ENCODE measurements at regions of chr6 and their contacts with region 1.

Region 1: GRCh38 chr6:11653028-11653583 is 115.6 kb downstream of the TMEM170B start:
- DNase-seq: peak in 3 of 4 experiments; percentile 24 to 33 (median 30)
- ATAC-seq: no peak; the same call in 2 of the 3 replicates
- H3K4me3 ChIP-seq: no peak overlapping the region
- H3K27ac ChIP-seq: no peak overlapping the region
- H3K4me1 ChIP-seq: no peaks in the 10 kb centered on the region
- H3K27me3 ChIP-seq: peaks cover 25 to 48% of the 10 kb centered on the region in 2 experiments
- CTCF ChIP-seq: no peak
- EP300 ChIP-seq: no peak
- POLR2A ChIP-seq: no peak
- RAD21 ChIP-seq: no peak

Region 2: GRCh38 chr6:11585426-11586016 is 67.6 kb before region 1 on chr6:
- CTCF ChIA-PET with region 1: interaction called, 4 read pairs
- POLR2A ChIA-PET with region 1: no interaction called
- in situ Hi-C with region 1: no loop called
- intact Hi-C with region 1: loop called (anchors 2 kb)
- DNase-seq: peak; percentile 21 to 64 (median 39)
- ATAC-seq: peak; percentile 75
- H3K4me3 ChIP-seq: no peak overlapping the region
- H3K27ac ChIP-seq: no peak overlapping the region
- H3K4me1 ChIP-seq: no peaks in the 10 kb centered on the region
- H3K27me3 ChIP-seq: peaks cover 4 to 16% of the 10 kb centered on the region in 2 experiments; a peak in 3 of 5 replicates
- CTCF ChIP-seq: peak; percentile 49 to 83 (median 62); a peak in 5 of 6 replicates
- EP300 ChIP-seq: no peak
- POLR2A ChIP-seq: no peak
- RAD21 ChIP-seq: peak; percentile 85 to 88

Region 3: DNA sequence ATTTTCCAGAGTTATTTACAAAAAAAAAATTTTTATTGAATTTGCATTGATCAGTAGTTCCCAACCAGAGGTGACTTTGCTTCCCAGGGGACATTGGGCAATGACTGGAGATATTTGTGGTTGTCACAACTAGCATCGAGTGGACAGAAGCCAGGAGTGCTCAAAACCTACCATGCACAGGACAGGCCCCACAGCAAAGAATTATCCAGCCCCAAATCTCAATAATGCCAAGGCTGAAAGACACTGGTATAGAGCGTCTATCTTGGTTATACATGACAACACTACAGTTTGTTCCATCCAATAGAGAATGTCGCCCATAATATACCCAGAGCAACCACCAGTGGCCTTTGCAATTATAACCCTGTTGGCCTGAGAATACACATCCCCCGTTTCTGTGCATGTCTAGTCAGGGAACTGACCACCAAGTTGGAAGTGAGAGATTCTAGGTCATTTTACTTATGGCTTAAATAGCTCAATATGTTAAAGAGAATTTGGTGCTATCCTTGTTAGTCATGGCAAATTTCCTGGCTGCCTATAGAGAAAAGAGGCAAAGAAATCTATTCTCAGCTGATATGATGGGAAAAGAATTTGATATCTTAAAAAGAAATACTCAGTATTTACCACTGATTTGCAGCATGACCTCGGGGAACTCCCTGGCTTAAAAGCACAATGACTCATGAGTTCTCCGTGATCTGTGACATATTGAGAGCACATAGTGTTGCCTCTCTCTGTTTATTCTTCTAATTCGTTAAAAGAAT is 201.5 kb after region 1 on chr6:
- CTCF ChIA-PET with region 1: no interaction called
- POLR2A ChIA-PET with region 1: no interaction called
- in situ Hi-C with region 1: no loop called
- intact Hi-C with region 1: no loop called
- DNase-seq: peak in 2 of 4 experiments; percentile 35 to 42
- ATAC-seq: peak; percentile 75
- H3K4me3 ChIP-seq: no peak overlapping the region
- H3K27ac ChIP-seq: no peak overlapping the region
- H3K4me1 ChIP-seq: peaks cover 0 to 2% of the 10 kb centered on the region in 2 experiments; a peak in 2 of 5 replicates
- H3K27me3 ChIP-seq: no peaks in the 10 kb centered on the region
- CTCF ChIP-seq: no peak
- EP300 ChIP-seq: no peak
- POLR2A ChIP-seq: no peak
- RAD21 ChIP-seq: no peak

Region 4: DNA sequence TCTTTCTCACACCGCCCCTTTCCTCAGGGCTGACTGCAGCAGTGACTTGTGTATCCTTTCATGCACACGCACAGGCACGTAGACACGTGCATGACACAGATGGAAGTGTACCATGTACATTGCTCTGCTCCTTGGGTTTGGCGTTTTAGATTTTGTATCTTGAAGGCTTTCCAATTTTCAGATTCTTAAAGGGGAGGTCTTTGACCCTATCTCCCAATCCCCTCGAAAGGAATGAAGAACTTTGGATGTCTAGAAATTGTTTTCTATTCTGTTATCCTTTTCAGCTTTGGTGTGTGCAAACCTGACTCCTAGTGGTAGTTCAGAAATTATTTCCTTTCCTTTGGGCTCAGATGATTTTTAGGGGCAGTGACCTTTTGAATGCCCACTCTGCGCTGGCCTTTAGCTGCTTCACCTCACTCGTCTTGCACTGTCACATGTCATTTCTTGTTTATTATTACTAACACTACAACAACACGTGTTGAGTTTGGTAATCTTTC is 422.0 kb after region 1 on chr6:
- CTCF ChIA-PET with region 1: interaction called, 19 read pairs
- POLR2A ChIA-PET with region 1: no interaction called
- in situ Hi-C with region 1: no loop called
- intact Hi-C with region 1: loop called (anchors 2 kb)
- DNase-seq: peak in 2 of 4 experiments; percentile 40 to 47
- ATAC-seq: peak; percentile 74
- H3K4me3 ChIP-seq: no peak overlapping the region
- H3K27ac ChIP-seq: no peak overlapping the region
- H3K4me1 ChIP-seq: peaks cover 0 to 14% of the 10 kb centered on the region in 2 experiments; a peak in 3 of 5 replicates
- H3K27me3 ChIP-seq: no peaks in the 10 kb centered on the region
- CTCF ChIP-seq: peak; percentile 51 to 72 (median 57); a peak in 5 of 6 replicates
- EP300 ChIP-seq: no peak
- POLR2A ChIP-seq: no peak
- RAD21 ChIP-seq: peak; percentile 73 to 80

Region 5: GRCh38 chr6:12233693-12234571 is 580.8 kb after region 1 on chr6:
- CTCF ChIA-PET with region 1: interaction called, 27 read pairs
- POLR2A ChIA-PET with region 1: interaction called, 3 read pairs
- in situ Hi-C with region 1: no loop called
- intact Hi-C with region 1: loop called (anchors 1 kb)
- DNase-seq: peak in 3 of 4 experiments; percentile 18 to 54 (median 23)
- ATAC-seq: peak; percentile 84
- H3K4me3 ChIP-seq: no peak overlapping the region
- H3K27ac ChIP-seq: no peak overlapping the region
- H3K4me1 ChIP-seq: no peaks in the 10 kb centered on the region
- H3K27me3 ChIP-seq: peaks cover 2 to 5% of the 10 kb centered on the region in 2 experiments
- CTCF ChIP-seq: peak; percentile 63 to 96 (median 96)
- EP300 ChIP-seq: no peak
- POLR2A ChIP-seq: no peak
- RAD21 ChIP-seq: peak; percentile 76 to 83

Region 6: DNA sequence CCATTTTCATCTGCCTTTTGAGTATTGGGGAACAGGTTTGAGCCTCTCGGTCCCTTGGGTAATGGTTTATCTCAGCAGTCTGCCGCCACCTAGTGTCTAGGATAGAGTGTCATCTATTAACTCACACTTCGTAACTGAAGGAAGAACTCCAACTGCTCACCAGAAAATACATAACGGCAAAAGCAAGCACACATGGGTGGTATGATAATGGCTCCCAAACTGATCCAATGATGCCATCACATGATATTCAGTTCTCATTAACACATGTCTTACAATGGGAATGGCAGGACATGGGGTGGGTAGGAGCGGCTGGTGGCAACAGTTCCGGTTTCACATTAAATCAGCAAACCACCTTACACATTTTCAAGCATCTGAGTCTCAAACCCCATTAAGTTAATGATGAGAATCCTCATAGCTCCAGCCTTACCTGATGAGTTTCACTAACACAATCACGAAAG is 952.8 kb after region 1 on chr6:
- CTCF ChIA-PET with region 1: interaction called, 15 read pairs
- POLR2A ChIA-PET with region 1: no interaction called
- in situ Hi-C with region 1: loop called (anchors 10 kb)
- intact Hi-C with region 1: loop called (anchors 5 kb)
- DNase-seq: peak; percentile 34 to 75 (median 45)
- ATAC-seq: peak; percentile 99
- H3K4me3 ChIP-seq: no peak overlapping the region
- H3K27ac ChIP-seq: no peak overlapping the region
- H3K4me1 ChIP-seq: no peaks in the 10 kb centered on the region
- H3K27me3 ChIP-seq: no peaks in the 10 kb centered on the region
- CTCF ChIP-seq: peak; percentile 73 to 83 (median 80)
- EP300 ChIP-seq: no peak
- POLR2A ChIP-seq: no peak
- RAD21 ChIP-seq: peak; percentile 82 to 83

Region 7: DNA sequence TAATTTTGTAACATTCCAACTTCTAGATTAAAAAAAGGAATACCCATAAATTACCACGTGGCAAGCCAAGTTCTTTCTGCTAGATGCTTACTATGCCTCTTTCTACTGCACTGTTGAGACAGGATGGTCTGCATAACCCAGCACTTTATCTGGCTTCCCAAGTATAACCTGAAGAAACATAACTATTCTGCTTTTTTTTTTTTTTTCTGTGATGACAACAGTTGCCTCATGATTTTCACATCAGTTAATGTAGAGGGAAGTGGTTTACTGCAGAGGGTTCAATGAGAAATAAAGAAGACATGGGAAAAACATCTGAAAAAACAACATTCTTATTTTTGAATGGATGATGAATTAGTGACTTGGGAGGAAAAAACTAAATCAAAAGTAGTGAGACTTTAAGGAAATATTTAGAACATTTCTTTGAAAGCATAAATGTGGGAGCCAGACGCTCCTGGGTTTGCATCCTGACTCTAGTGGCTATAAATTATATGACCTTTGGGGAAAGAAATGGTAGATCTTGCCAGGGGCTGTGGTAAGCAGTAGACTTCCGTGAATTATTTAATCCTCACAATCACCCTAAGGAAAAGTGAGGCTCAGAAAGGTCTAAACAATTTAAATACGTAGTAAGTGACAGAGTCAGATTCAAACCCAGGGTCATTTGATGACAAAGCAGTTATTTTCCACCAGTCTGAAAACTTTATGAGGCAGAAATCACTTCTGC is 1294.2 kb after region 1 on chr6:
- CTCF ChIA-PET with region 1: no interaction called
- POLR2A ChIA-PET with region 1: no interaction called
- in situ Hi-C with region 1: no loop called
- intact Hi-C with region 1: no loop called
- DNase-seq: no peak
- ATAC-seq: no peak
- H3K4me3 ChIP-seq: no peak overlapping the region
- H3K27ac ChIP-seq: no peak overlapping the region
- H3K4me1 ChIP-seq: no peaks in the 10 kb centered on the region
- H3K27me3 ChIP-seq: peaks cover 0 to 3% of the 10 kb centered on the region in 2 experiments; a peak in 1 of 5 replicates
- CTCF ChIP-seq: no peak
- EP300 ChIP-seq: no peak
- POLR2A ChIP-seq: no peak
- RAD21 ChIP-seq: no peak

Measured in K562 (cell line).